ENCODE measurements at regions of chr19 and their contacts with region 1.

Region 1: GRCh38 chr19:9796113-9796773 is 22.6 kb downstream of the FBXL12 start:
- DNase-seq: peak; percentile 92
- ATAC-seq: peak; percentile 18
- H3K4me3 ChIP-seq: no peak overlapping the region
- H3K4me3 Mint-ChIP-seq: peak overlapping the region; percentile 23
- H3K27ac ChIP-seq: peak overlapping the region; percentile 52 to 72
- H3K27ac Mint-ChIP-seq: peak overlapping the region; percentile 79
- H3K4me1 ChIP-seq: peaks cover 0 to 19% of the 10 kb centered on the region in 2 donors
- H3K4me1 Mint-ChIP-seq: peaks cover 12% of the 10 kb centered on the region
- H3K27me3 ChIP-seq: no peaks in the 10 kb centered on the region
- H3K27me3 Mint-ChIP-seq: no peaks in the 10 kb centered on the region
- CTCF ChIP-seq: peak; percentile 79

Region 2: DNA sequence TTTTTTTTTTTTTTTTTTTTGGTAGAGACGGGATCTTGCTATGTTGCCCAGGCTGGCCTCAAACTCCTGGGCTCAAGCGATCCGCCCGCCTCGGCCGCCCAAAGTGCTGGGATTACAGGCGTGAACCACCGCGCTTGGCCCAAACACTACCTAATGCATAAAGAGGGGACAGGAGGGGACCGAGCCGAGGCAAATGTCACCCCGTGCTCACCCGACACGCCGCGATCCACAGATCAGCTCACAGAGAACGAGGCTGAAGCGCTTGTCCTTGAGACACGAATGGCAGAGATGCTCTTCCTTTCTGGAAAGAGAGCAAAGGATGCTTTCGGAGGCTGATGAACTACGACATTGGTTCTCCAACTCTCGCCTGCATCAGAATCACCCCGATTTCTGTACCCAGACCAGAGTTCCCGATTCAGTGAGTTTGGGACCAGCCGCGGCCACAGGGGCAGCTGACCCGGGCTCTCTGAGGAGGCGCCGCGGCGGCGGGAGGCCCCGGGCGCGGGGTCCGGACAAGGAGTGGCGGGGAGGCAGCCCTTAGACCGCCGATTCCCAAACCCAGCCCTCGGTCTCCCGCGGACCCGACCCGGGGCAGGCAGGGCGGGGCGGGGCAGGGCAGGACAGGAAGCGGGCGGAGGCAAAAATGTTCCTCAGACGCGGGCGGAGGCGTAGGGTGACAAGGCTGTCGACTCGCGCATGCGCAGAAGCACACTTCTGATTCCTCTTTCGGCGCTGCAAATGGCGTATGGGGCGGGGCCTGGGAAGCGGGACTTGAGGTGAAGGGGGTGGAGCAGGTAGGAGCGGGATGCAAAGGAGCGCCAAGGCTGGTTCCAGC is 486.9 kb before region 1 on chr19 and contains the start of gene ZNF699:
- CTCF ChIA-PET with region 1: interaction called, 4 read pairs
- POLR2A ChIA-PET with region 1: no interaction called
- intact Hi-C with region 1: loop called (anchors 1 kb)
- DNase-seq: peak; percentile 99
- ATAC-seq: peak; percentile 87
- H3K4me3 ChIP-seq: peak within 1 kb of the TSS; percentile 77 to 100 (median 87)
- H3K4me3 Mint-ChIP-seq: peak within 1 kb of the TSS; percentile 87
- H3K27ac ChIP-seq: peak within 1 kb of the TSS; percentile 73 to 92
- H3K27ac Mint-ChIP-seq: peak within 1 kb of the TSS; percentile 92
- H3K4me1 ChIP-seq: peaks cover 9 to 12% of the 10 kb centered on the region in 2 donors
- H3K4me1 Mint-ChIP-seq: peaks cover 24% of the 10 kb centered on the region
- H3K27me3 ChIP-seq: no peaks in the 10 kb centered on the region
- H3K27me3 Mint-ChIP-seq: no peaks in the 10 kb centered on the region
- CTCF ChIP-seq: no peak
- total RNA-seq, gene ZNF699: 17.3 and 22.0 TPM in 2 replicates

Region 3: DNA sequence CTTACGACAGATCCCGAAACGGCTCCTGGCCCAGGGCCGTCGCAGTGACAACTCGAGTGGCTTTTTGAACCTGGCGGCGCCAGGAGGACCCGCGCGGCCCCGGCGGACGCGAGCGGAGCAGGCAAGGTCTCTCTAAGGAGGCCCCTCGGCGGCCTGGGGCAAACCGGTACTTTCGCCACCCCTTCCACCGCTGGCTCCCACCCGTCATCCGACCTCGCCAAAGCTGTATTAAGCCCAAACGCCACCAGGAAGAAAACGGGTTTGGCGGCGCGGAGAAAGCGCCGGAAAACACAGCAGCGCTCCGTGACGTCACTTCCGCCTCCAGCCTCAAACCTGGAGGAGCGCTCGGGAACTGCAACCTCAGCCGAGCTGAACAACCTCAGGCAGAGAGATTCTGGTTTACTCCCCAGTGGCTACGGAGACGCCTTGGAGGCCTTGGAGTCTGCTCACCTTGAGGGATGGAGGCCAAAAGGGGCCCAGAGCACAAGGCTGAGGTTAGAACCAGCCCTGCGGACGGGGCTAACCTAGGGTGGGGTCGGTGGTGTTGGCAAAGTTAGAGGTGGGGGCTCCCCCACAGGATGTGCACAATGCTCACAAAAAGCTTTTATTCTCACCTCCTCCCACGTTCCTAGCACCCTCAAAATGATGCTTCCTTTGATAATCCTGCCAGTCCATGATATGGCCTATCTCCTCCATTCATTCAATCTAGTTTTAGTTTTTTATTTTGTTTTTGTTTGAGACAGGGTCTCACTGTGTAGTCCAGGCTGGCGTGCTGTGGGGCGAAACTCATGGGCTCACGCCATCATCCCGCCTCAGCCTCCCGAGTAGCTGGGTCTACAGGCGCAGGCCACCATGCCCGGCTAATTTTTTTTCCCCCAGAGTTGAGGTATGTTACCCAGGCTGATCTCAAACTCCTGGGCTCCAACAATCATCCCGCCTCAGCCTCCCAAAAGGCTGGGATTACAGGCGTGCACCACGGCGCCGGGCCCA is 360.7 kb before region 1 on chr19 and contains the start of gene ZNF266:
- CTCF ChIA-PET with region 1: no interaction called
- POLR2A ChIA-PET with region 1: no interaction called
- intact Hi-C with region 1: loop called (anchors 1 kb)
- DNase-seq: peak; percentile 95
- ATAC-seq: peak; percentile 93
- H3K4me3 ChIP-seq: peak within 1 kb of the TSS; percentile 64 to 91 (median 80)
- H3K4me3 Mint-ChIP-seq: peak within 1 kb of the TSS; percentile 95
- H3K27ac ChIP-seq: peak within 1 kb of the TSS; percentile 92 to 93
- H3K27ac Mint-ChIP-seq: peak within 1 kb of the TSS; percentile 98
- H3K4me1 ChIP-seq: peaks cover 16 to 26% of the 10 kb centered on the region in 2 donors
- H3K4me1 Mint-ChIP-seq: peaks cover 35% of the 10 kb centered on the region
- H3K27me3 ChIP-seq: no peaks in the 10 kb centered on the region
- H3K27me3 Mint-ChIP-seq: no peaks in the 10 kb centered on the region
- CTCF ChIP-seq: peak; percentile 77
- total RNA-seq, gene ZNF266: 76.0 and 81.4 TPM in 2 replicates

Region 4: DNA sequence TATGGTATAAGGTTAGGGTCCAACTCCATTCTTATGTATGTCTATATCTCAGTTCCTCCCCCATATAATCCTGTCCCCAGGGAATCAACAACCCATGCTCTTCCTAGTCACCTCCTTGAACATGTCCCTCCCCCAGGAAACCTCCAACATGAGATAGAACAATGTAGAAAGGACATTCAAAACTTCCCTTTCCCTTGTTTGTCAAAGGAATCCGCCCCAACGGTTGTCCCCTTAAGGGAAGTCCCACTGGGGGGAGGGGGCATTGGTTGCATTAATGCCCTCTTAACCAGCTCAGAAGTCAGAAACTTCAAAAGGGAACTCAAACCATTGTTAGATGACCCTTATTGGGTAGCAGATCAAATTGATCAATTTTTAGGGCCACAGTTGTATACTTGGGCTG is 168.4 kb before region 1 on chr19:
- CTCF ChIA-PET with region 1: interaction called, 30 read pairs
- POLR2A ChIA-PET with region 1: no interaction called
- intact Hi-C with region 1: loop called (anchors 1 kb)
- DNase-seq: no peak
- ATAC-seq: no peak
- H3K4me3 ChIP-seq: no peak overlapping the region
- H3K4me3 Mint-ChIP-seq: no peak overlapping the region
- H3K27ac ChIP-seq: no peak overlapping the region
- H3K27ac Mint-ChIP-seq: no peak overlapping the region
- H3K4me1 ChIP-seq: no peaks in the 10 kb centered on the region
- H3K4me1 Mint-ChIP-seq: peaks cover 3% of the 10 kb centered on the region
- H3K27me3 ChIP-seq: no peaks in the 10 kb centered on the region
- H3K27me3 Mint-ChIP-seq: no peaks in the 10 kb centered on the region
- CTCF ChIP-seq: no peak

Region 5: DNA sequence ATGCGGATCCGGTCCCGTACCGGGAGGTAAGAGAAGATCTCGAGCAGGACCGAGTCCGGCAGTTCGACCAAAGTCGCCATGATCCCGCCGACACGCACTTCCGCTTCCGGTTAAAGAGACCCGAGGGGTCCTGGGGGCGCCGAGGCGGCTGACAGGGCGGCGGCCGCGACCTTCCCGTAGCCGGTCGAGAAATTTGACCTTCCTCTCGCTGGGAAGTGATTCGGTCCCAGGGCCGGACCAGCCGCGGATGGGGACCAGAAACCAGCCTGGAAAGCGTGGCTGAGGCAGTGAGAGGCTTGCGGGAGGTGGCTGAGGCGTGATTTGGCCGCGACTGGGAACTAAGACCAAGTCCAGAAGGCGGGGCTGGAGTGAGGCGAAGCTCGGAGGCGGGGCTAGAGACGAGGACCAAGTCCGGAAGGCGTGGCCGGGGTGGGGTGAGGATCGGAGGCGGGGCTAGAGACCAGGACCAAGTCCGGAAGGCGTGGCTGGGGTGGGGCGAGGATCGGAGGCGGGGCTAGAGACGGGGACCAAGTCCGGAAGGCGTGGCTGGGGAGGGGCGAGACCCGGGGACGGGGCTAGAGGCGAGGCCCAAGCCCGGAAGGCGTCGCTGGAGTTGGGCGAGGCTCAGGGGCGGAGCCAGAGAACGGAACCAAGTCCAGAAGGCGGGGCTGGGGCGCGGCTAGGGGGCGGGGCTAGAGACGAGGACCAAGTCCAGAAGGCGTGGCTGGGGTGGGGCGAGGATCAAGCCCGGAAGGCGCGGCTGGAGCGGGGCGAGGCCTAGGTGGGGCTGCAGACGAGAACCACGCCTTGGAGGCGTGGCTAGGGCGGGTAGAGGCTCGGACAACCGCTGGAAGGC is 22.7 kb after region 1 on chr19 and contains the start of gene FBXL12:
- CTCF ChIA-PET with region 1: interaction called, 3 read pairs
- POLR2A ChIA-PET with region 1: interaction called, 3 read pairs
- intact Hi-C with region 1: loop called (anchors 1 kb)
- DNase-seq: peak; percentile 100
- ATAC-seq: peak; percentile 84
- H3K4me3 ChIP-seq: peak within 1 kb of the TSS; percentile 47 to 98 (median 96)
- H3K4me3 Mint-ChIP-seq: peak within 1 kb of the TSS; percentile 95
- H3K27ac ChIP-seq: peak within 1 kb of the TSS; percentile 92 to 98
- H3K27ac Mint-ChIP-seq: peak within 1 kb of the TSS; percentile 92
- H3K4me1 ChIP-seq: peaks cover 10 to 15% of the 10 kb centered on the region in 2 donors
- H3K4me1 Mint-ChIP-seq: peaks cover 29% of the 10 kb centered on the region
- H3K27me3 ChIP-seq: no peaks in the 10 kb centered on the region
- H3K27me3 Mint-ChIP-seq: no peaks in the 10 kb centered on the region
- CTCF ChIP-seq: no peak
- total RNA-seq, gene FBXL12: 41.5 and 41.6 TPM in 2 replicates

Region 6: GRCh38 chr19:9847087-9847671 is 50.9 kb after region 1 on chr19:
- CTCF ChIA-PET with region 1: no interaction called
- POLR2A ChIA-PET with region 1: no interaction called
- intact Hi-C with region 1: no loop called
- DNase-seq: no peak
- ATAC-seq: no peak
- H3K4me3 ChIP-seq: no peak overlapping the region
- H3K4me3 Mint-ChIP-seq: no peak overlapping the region
- H3K27ac ChIP-seq: no peak overlapping the region
- H3K27ac Mint-ChIP-seq: no peak overlapping the region
- H3K4me1 ChIP-seq: no peaks in the 10 kb centered on the region
- H3K4me1 Mint-ChIP-seq: no peaks in the 10 kb centered on the region
- H3K27me3 ChIP-seq: no peaks in the 10 kb centered on the region
- H3K27me3 Mint-ChIP-seq: no peaks in the 10 kb centered on the region
- CTCF ChIP-seq: no peak

Measured in B cell (primary cell).